Mammary epithelial cell (primary cell): ENCODE measurements at regions of chr7 and their contacts with region 1.

Region 1: GRCh38 chr7:142301923-142302550 is 44.2 kb upstream of the PRSS58 start:
- DNase-seq: no peak
- H3K4me3 ChIP-seq: no peak overlapping the region
- H3K27ac ChIP-seq: no peak overlapping the region
- H3K4me1 ChIP-seq: no peaks in the 10 kb centered on the region
- H3K27me3 ChIP-seq: peaks cover 3% of the 10 kb centered on the region
- CTCF ChIP-seq: peak; percentile 57 to 71

Region 2: DNA sequence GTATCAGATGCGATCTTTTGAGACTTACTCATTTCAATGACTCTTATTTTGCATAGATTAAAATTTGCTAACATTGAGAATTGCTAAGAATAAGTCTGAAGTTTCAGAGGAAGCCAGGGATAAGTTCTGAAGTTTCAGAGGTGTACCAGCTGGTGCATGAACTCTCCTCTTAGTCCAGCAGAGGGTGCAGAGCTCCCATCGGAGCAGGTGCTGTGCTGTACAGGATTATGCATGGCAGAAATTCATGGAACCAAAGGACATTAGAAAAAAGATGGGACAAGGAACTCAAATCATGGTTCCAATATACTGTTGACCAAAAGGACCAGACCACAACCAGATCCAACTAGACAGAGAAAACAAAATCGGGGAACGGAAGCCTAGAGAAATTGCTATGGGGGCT is 148.6 kb before region 1 on chr7:
- CTCF ChIA-PET with region 1: no interaction called
- dilution Hi-C with region 1: no loop called
- in situ Hi-C with region 1: no loop called
- intact Hi-C with region 1: loop called (anchors 2 kb)
- DNase-seq: peak; percentile 22
- H3K4me3 ChIP-seq: no peak overlapping the region
- H3K27ac ChIP-seq: no peak overlapping the region
- H3K4me1 ChIP-seq: no peaks in the 10 kb centered on the region
- H3K27me3 ChIP-seq: no peaks in the 10 kb centered on the region
- CTCF ChIP-seq: peak; percentile 43 to 73

Region 3: GRCh38 chr7:142248166-142249160 is 53.6 kb before region 1 on chr7:
- CTCF ChIA-PET with region 1: no interaction called
- dilution Hi-C with region 1: no loop called
- in situ Hi-C with region 1: no loop called
- intact Hi-C with region 1: no loop called
- DNase-seq: no peak
- H3K4me3 ChIP-seq: no peak overlapping the region
- H3K27ac ChIP-seq: no peak overlapping the region
- H3K4me1 ChIP-seq: no peaks in the 10 kb centered on the region
- H3K27me3 ChIP-seq: peaks cover 5% of the 10 kb centered on the region
- CTCF ChIP-seq: no peak

Region 4: DNA sequence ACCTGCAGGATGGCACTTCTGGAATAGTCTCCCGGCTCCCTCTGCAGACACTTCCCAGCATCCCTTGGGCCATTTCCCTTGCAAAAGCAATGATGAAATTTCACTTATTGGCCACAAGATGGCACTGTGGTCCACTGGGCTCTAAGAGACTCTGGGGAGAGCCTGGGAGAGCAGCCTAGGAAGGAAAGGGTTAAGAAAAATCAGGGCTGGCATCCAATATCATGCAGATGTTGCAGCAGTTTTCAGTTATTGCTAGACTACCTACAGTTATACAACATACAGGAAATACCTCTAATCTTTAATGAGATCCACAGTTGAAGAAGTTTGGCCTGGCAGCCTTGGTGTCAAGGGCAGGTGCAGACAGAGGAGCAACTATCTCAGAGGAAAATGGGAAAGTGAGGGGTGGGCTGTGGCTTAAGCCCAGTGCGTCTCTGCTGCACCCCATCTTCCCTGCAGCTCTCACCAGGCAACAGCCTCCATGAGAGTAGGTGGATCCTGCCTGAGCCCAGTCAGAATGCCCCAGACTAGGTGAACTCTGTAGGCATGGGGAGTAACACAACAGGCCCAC is 56.0 kb after region 1 on chr7:
- CTCF ChIA-PET with region 1: no interaction called
- dilution Hi-C with region 1: no loop called
- in situ Hi-C with region 1: no loop called
- intact Hi-C with region 1: loop called (anchors 2 kb)
- DNase-seq: peak; percentile 65
- H3K4me3 ChIP-seq: no peak overlapping the region
- H3K27ac ChIP-seq: no peak overlapping the region
- H3K4me1 ChIP-seq: no peaks in the 10 kb centered on the region
- H3K27me3 ChIP-seq: no peaks in the 10 kb centered on the region
- CTCF ChIP-seq: peak; percentile 82 to 92